CD4-positive, alpha-beta T cell (primary cell): ENCODE measurements at regions of chr11 and their contacts with region 1.

Region 1: DNA sequence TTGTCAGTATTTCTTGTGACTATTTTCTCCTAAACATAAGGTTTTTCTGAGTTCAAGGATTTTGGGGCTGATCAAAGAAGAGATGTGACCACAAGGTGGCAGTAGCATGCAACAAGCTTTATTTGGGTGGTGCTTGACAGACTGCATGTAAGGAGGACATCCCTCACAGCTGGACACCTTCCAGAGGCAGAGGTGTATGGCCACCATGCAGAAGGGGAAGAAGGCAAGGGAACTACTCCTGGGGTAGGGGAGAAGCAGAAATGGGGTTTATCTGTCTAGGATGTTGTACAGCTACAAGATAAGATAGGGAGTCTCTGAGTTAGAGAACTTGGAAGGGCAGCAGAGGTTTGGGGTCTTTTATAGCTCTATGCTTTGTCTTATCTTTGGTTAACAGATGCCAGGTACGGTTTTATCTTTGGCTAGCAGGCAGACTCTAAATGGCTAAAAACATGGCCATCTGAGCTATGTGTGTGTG is 5.1 kb upstream of the BIRC2 start:
- DNase-seq: peak; percentile 45 to 89 (median 66)
- ATAC-seq: peak; percentile 24
- H3K4me3 ChIP-seq: no peak overlapping the region
- H3K4me3 Mint-ChIP-seq: peak overlapping the region; percentile 28
- H3K27ac ChIP-seq: no peak overlapping the region
- H3K27ac Mint-ChIP-seq: peak overlapping the region; percentile 14
- H3K4me1 ChIP-seq: peaks cover 9% of the 10 kb centered on the region
- H3K4me1 Mint-ChIP-seq: peaks cover 18% of the 10 kb centered on the region
- H3K27me3 ChIP-seq: no peaks in the 10 kb centered on the region
- H3K27me3 Mint-ChIP-seq: no peaks in the 10 kb centered on the region
- CTCF ChIP-seq: peak; percentile 75

Region 2: GRCh38 chr11:102287964-102288724 is 53.7 kb before region 1 on chr11:
- CTCF ChIA-PET with region 1: interaction called, 24 read pairs
- POLR2A ChIA-PET with region 1: interaction called, 12 read pairs
- intact Hi-C with region 1: loop called in 1 of 2 experiments (anchors 2 kb)
- DNase-seq: peak in 8 of 14 experiments; percentile 4 to 86 (median 35)
- ATAC-seq: peak; percentile 89
- H3K4me3 ChIP-seq: no peak overlapping the region
- H3K4me3 Mint-ChIP-seq: peak overlapping the region; percentile 50
- H3K27ac ChIP-seq: no peak overlapping the region
- H3K27ac Mint-ChIP-seq: no peak overlapping the region
- H3K4me1 ChIP-seq: peaks cover 9% of the 10 kb centered on the region
- H3K4me1 Mint-ChIP-seq: peaks cover 24% of the 10 kb centered on the region
- H3K27me3 ChIP-seq: no peaks in the 10 kb centered on the region
- H3K27me3 Mint-ChIP-seq: no peaks in the 10 kb centered on the region
- CTCF ChIP-seq: peak; percentile 73

Region 3: DNA sequence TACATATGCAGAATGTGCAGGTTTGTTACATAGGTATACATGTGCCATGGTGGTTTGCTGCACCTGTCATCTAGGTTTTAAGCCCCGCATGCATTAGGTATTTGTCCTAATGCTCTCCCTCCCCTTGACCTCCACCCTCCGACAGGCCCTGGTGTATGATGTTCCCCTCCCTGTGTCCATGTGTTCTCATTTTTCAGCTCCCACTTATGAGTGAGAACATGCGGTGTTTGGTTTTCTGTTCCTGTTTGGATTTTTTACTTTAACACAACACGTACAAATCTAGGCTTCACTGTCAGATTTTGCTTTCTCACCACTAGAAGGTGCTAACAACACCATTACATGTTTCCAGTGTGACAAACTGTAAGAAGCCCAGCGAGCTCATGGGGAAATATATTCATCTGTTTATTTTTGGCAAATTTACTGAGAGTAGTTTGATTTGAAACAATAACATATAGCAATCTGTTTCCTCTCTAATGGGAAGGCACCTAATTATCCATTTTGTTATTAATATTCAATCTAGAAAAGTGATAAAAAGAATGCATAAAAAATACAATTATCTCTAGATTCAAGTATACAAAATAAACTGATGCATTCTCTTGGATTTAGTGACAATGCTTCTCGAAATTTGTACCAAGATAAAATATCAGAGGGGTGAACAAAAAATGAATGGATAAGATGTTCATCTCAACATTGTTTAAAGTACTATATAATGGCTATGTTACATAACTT is 47.8 kb before region 1 on chr11:
- CTCF ChIA-PET with region 1: interaction called, 24 read pairs
- POLR2A ChIA-PET with region 1: interaction called, 12 read pairs
- intact Hi-C with region 1: loop called (anchors 2 kb)
- DNase-seq: peak in 5 of 14 experiments; percentile 8 to 85 (median 79)
- ATAC-seq: peak; percentile 99
- H3K4me3 ChIP-seq: peak overlapping the region; percentile 48
- H3K4me3 Mint-ChIP-seq: peak overlapping the region; percentile 82
- H3K27ac ChIP-seq: no peak overlapping the region
- H3K27ac Mint-ChIP-seq: peak overlapping the region; percentile 68
- H3K4me1 ChIP-seq: peaks cover 14% of the 10 kb centered on the region
- H3K4me1 Mint-ChIP-seq: peaks cover 36% of the 10 kb centered on the region
- H3K27me3 ChIP-seq: no peaks in the 10 kb centered on the region
- H3K27me3 Mint-ChIP-seq: no peaks in the 10 kb centered on the region
- CTCF ChIP-seq: peak; percentile 92

Region 4: GRCh38 chr11:102367364-102367763 is 25.5 kb after region 1 on chr11:
- CTCF ChIA-PET with region 1: interaction called, 17 read pairs
- POLR2A ChIA-PET with region 1: no interaction called
- intact Hi-C with region 1: no loop called
- DNase-seq: peak in 3 of 14 experiments; percentile 56 to 64 (median 60)
- ATAC-seq: peak; percentile 78
- H3K4me3 ChIP-seq: no peak overlapping the region
- H3K4me3 Mint-ChIP-seq: no peak overlapping the region
- H3K27ac ChIP-seq: no peak overlapping the region
- H3K27ac Mint-ChIP-seq: peak overlapping the region; percentile 75
- H3K4me1 ChIP-seq: no peaks in the 10 kb centered on the region
- H3K4me1 Mint-ChIP-seq: peaks cover 34% of the 10 kb centered on the region
- H3K27me3 ChIP-seq: no peaks in the 10 kb centered on the region
- H3K27me3 Mint-ChIP-seq: no peaks in the 10 kb centered on the region
- CTCF ChIP-seq: peak; percentile 59

Region 5: GRCh38 chr11:102614485-102614884 is 272.6 kb after region 1 on chr11:
- CTCF ChIA-PET with region 1: interaction called, 3 read pairs
- POLR2A ChIA-PET with region 1: interaction called, 4 read pairs
- intact Hi-C with region 1: loop called (anchors 2 to 5 kb)
- DNase-seq: no peak
- ATAC-seq: no peak
- H3K4me3 ChIP-seq: no peak overlapping the region
- H3K4me3 Mint-ChIP-seq: no peak overlapping the region
- H3K27ac ChIP-seq: no peak overlapping the region
- H3K27ac Mint-ChIP-seq: no peak overlapping the region
- H3K4me1 ChIP-seq: peaks cover 3% of the 10 kb centered on the region
- H3K4me1 Mint-ChIP-seq: no peaks in the 10 kb centered on the region
- H3K27me3 ChIP-seq: no peaks in the 10 kb centered on the region
- H3K27me3 Mint-ChIP-seq: peaks cover 4% of the 10 kb centered on the region
- CTCF ChIP-seq: no peak

Region 6: GRCh38 chr11:102666331-102666957 is 324.6 kb after region 1 on chr11:
- CTCF ChIA-PET with region 1: interaction called, 11 read pairs
- POLR2A ChIA-PET with region 1: interaction called, 8 read pairs
- intact Hi-C with region 1: loop called in 1 of 2 experiments (anchors 2 kb)
- DNase-seq: peak in 5 of 14 experiments; percentile 2 to 57 (median 45)
- ATAC-seq: peak; percentile 55
- H3K4me3 ChIP-seq: no peak overlapping the region
- H3K4me3 Mint-ChIP-seq: no peak overlapping the region
- H3K27ac ChIP-seq: no peak overlapping the region
- H3K27ac Mint-ChIP-seq: no peak overlapping the region
- H3K4me1 ChIP-seq: no peaks in the 10 kb centered on the region
- H3K4me1 Mint-ChIP-seq: no peaks in the 10 kb centered on the region
- H3K27me3 ChIP-seq: no peaks in the 10 kb centered on the region
- H3K27me3 Mint-ChIP-seq: peaks cover 9% of the 10 kb centered on the region
- CTCF ChIP-seq: peak; percentile 86

Region 7: DNA sequence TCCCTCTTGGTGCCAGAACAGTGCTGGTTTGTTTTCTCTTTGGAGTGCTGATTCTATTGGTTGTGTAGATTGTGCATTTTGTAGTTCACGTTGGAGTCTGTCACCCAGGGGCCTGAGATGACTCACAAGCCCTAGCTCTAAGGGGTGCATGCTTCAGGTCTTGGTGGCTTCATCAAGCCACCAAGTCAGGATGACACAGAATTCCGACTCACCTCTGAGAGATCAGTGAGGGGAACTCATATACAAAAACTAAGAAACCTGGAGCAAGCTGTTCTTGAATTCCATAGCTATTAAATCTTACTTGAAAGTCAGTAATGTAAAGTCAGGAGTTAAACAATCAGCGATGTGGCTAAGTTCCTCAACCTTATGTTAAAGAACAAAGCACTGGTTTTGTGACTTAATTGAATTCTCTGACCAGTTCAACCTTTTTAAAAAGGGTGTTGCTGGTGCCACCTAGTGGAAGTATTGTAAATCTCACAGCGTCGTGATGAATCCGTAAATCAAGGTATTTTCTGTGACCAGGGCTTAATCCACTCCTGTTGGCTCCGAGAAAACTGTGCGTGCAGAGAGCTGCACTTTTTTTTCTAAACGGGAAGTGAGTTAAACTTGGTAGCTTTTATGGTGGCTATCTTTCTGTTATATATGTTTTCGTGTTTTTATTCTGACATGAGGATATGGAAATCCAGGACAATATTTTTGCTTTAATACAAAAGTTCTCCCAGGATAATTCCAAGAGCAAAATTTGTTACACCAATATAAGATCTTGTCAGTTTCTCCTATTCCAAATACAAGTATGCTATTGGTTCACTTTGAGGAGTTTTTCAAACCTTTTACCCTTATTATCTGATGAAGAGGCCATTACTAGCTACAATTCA is 599.1 kb after region 1 on chr11:
- CTCF ChIA-PET with region 1: no interaction called
- POLR2A ChIA-PET with region 1: no interaction called
- intact Hi-C with region 1: loop called (anchors 2 to 10 kb)
- DNase-seq: peak in 8 of 14 experiments; percentile 2 to 61 (median 18)
- ATAC-seq: peak; percentile 49
- H3K4me3 ChIP-seq: no peak overlapping the region
- H3K4me3 Mint-ChIP-seq: no peak overlapping the region
- H3K27ac ChIP-seq: no peak overlapping the region
- H3K27ac Mint-ChIP-seq: no peak overlapping the region
- H3K4me1 ChIP-seq: no peaks in the 10 kb centered on the region
- H3K4me1 Mint-ChIP-seq: peaks cover 5% of the 10 kb centered on the region
- H3K27me3 ChIP-seq: no peaks in the 10 kb centered on the region
- H3K27me3 Mint-ChIP-seq: peaks cover 16% of the 10 kb centered on the region
- CTCF ChIP-seq: peak; percentile 81